ENCODE measurements at regions of chr15 and their contacts with region 1.

Region 1: DNA sequence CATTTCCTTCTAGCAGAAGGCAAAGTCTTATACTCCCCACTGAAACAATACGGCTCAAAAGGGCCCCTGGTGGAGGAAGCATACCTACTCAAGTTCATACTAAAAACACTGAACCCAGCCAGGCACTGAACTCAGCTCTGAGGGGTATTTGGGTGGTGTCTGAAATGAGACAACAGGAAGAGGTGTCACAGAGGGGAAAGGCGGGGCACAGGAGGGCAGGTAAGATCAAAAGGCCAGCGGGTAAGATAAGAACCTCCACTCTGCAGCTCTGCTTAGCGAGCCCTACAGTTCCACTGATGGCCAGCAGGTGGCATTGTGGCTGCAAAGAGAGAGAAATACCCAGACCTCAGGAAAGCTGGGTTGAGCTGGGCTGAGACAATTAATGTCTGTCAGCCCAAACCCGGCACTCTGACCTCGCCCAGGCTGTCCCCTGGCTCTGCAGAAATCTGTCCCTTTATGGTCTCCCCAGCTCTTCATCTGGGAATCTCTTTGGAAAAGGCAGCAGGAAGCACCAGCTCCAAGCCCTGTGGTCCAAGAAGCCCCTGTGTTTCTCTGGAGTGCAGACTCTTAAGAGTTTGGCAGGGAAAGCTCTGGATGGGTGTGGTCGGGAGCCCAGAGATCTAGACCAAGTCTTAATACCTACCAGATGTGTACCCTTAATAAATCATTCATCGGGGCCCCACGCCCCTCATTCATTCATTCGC is 8.4 kb downstream of the MFGE8 start:
- DNase-seq: peak; percentile 78
- H3K4me3 ChIP-seq: no peak overlapping the region
- H3K27ac ChIP-seq: no peak overlapping the region
- H3K4me1 ChIP-seq: no peaks in the 10 kb centered on the region
- H3K27me3 ChIP-seq: no peaks in the 10 kb centered on the region
- CTCF ChIP-seq: peak; percentile 97 to 98
- POLR2A ChIP-seq: no peak

Region 2: GRCh38 chr15:87863152-87863551 is 1041.6 kb before region 1 on chr15:
- CTCF ChIA-PET with region 1: no interaction called
- POLR2A ChIA-PET with region 1: no interaction called
- dilution Hi-C with region 1: no loop called
- intact Hi-C with region 1: no loop called
- DNase-seq: no peak
- H3K4me3 ChIP-seq: no peak overlapping the region
- H3K27ac ChIP-seq: no peak overlapping the region
- H3K4me1 ChIP-seq: no peaks in the 10 kb centered on the region
- H3K27me3 ChIP-seq: no peaks in the 10 kb centered on the region
- CTCF ChIP-seq: no peak
- POLR2A ChIP-seq: no peak

Region 3: DNA sequence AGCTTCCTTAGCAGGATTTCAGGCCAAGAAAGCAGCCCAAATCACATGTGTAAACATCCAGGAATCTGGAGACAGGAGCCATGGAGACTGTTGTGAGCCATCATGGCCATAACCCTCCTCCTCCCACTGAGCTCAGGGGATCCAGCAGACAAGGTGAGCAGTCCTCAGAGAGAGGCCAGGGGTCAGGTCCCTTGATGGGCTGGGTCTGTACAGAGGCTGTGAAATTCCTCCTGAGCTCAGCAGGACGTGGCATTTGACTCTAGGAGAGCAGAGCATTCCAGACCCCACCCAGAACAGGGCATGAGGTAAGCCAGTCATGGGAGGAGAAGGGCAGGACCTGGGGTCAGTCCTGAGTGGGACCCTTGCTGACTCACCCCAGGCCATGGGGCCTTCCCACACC is 168.6 kb before region 1 on chr15:
- CTCF ChIA-PET with region 1: no interaction called
- POLR2A ChIA-PET with region 1: no interaction called
- dilution Hi-C with region 1: no loop called
- intact Hi-C with region 1: no loop called
- DNase-seq: no peak
- H3K4me3 ChIP-seq: no peak overlapping the region
- H3K27ac ChIP-seq: no peak overlapping the region
- H3K4me1 ChIP-seq: no peaks in the 10 kb centered on the region
- H3K27me3 ChIP-seq: peaks cover 0 to 4% of the 10 kb centered on the region in 2 experiments
- CTCF ChIP-seq: no peak
- POLR2A ChIP-seq: no peak

Region 4: GRCh38 chr15:88865498-88866099 is 39.2 kb before region 1 on chr15:
- CTCF ChIA-PET with region 1: no interaction called
- POLR2A ChIA-PET with region 1: no interaction called
- dilution Hi-C with region 1: no loop called
- intact Hi-C with region 1: no loop called
- DNase-seq: peak; percentile 8
- H3K4me3 ChIP-seq: no peak overlapping the region
- H3K27ac ChIP-seq: no peak overlapping the region
- H3K4me1 ChIP-seq: peaks cover 6% of the 10 kb centered on the region
- H3K27me3 ChIP-seq: peaks cover 0 to 5% of the 10 kb centered on the region in 2 experiments
- CTCF ChIP-seq: no peak
- POLR2A ChIP-seq: no peak

Region 5: GRCh38 chr15:88878720-88879184 is 26.0 kb before region 1 on chr15:
- CTCF ChIA-PET with region 1: interaction called, 27 read pairs
- POLR2A ChIA-PET with region 1: no interaction called
- dilution Hi-C with region 1: no loop called
- intact Hi-C with region 1: no loop called
- DNase-seq: peak; percentile 39
- H3K4me3 ChIP-seq: no peak overlapping the region
- H3K27ac ChIP-seq: no peak overlapping the region
- H3K4me1 ChIP-seq: no peaks in the 10 kb centered on the region
- H3K27me3 ChIP-seq: no peaks in the 10 kb centered on the region
- CTCF ChIP-seq: peak; percentile 72 to 87
- POLR2A ChIP-seq: no peak

Region 6: GRCh38 chr15:88995449-88995848 is 90.7 kb after region 1 on chr15:
- CTCF ChIA-PET with region 1: interaction called, 11 read pairs
- POLR2A ChIA-PET with region 1: no interaction called
- dilution Hi-C with region 1: no loop called
- intact Hi-C with region 1: no loop called
- DNase-seq: no peak
- H3K4me3 ChIP-seq: no peak overlapping the region
- H3K27ac ChIP-seq: no peak overlapping the region
- H3K4me1 ChIP-seq: no peaks in the 10 kb centered on the region
- H3K27me3 ChIP-seq: no peaks in the 10 kb centered on the region
- CTCF ChIP-seq: no peak
- POLR2A ChIP-seq: no peak

Region 7: GRCh38 chr15:89003865-89004725 is 99.3 kb after region 1 on chr15:
- CTCF ChIA-PET with region 1: interaction called, 35 read pairs
- POLR2A ChIA-PET with region 1: no interaction called
- dilution Hi-C with region 1: no loop called
- intact Hi-C with region 1: no loop called
- DNase-seq: peak; percentile 8
- H3K4me3 ChIP-seq: no peak overlapping the region
- H3K27ac ChIP-seq: no peak overlapping the region
- H3K4me1 ChIP-seq: no peaks in the 10 kb centered on the region
- H3K27me3 ChIP-seq: peaks cover 0 to 1% of the 10 kb centered on the region in 2 experiments
- CTCF ChIP-seq: peak in 1 of 2 donors; percentile 38
- POLR2A ChIP-seq: no peak

Region 8: GRCh38 chr15:89017370-89018066 is 112.7 kb after region 1 on chr15:
- CTCF ChIA-PET with region 1: interaction called, 82 read pairs
- POLR2A ChIA-PET with region 1: no interaction called
- dilution Hi-C with region 1: no loop called
- intact Hi-C with region 1: loop called (anchors 1 kb)
- DNase-seq: peak; percentile 64
- H3K4me3 ChIP-seq: peak overlapping the region in 1 of 3 experiments; percentile 21
- H3K27ac ChIP-seq: no peak overlapping the region
- H3K4me1 ChIP-seq: no peaks in the 10 kb centered on the region
- H3K27me3 ChIP-seq: peaks cover 7 to 22% of the 10 kb centered on the region in 2 experiments
- CTCF ChIP-seq: peak; percentile 92
- POLR2A ChIP-seq: no peak

Region 9: DNA sequence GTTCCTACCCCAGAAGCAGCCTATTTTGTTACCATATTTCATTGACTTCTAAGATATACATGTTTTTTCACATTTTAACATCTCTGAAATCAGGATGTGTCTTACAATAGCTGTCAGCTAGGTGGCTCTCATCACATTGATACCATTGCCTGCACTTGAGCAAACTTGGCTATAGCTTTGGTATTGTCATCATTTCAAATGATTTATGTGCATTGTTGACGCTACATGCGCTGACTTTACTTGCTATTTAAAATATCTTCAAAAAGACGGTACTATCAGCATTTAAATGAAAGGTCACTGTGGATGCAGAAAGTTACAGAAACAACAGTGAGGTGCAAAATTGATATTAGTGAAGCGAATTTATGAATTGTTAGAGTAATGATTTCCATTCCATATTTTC is 129.5 kb after region 1 on chr15:
- CTCF ChIA-PET with region 1: interaction called, 11 read pairs
- POLR2A ChIA-PET with region 1: no interaction called
- dilution Hi-C with region 1: no loop called
- intact Hi-C with region 1: no loop called
- DNase-seq: peak; percentile 19
- H3K4me3 ChIP-seq: no peak overlapping the region
- H3K27ac ChIP-seq: no peak overlapping the region
- H3K4me1 ChIP-seq: no peaks in the 10 kb centered on the region
- H3K27me3 ChIP-seq: peaks cover 0 to 3% of the 10 kb centered on the region in 2 experiments
- CTCF ChIP-seq: peak in 1 of 2 donors; percentile 8
- POLR2A ChIP-seq: no peak

Region 10: DNA sequence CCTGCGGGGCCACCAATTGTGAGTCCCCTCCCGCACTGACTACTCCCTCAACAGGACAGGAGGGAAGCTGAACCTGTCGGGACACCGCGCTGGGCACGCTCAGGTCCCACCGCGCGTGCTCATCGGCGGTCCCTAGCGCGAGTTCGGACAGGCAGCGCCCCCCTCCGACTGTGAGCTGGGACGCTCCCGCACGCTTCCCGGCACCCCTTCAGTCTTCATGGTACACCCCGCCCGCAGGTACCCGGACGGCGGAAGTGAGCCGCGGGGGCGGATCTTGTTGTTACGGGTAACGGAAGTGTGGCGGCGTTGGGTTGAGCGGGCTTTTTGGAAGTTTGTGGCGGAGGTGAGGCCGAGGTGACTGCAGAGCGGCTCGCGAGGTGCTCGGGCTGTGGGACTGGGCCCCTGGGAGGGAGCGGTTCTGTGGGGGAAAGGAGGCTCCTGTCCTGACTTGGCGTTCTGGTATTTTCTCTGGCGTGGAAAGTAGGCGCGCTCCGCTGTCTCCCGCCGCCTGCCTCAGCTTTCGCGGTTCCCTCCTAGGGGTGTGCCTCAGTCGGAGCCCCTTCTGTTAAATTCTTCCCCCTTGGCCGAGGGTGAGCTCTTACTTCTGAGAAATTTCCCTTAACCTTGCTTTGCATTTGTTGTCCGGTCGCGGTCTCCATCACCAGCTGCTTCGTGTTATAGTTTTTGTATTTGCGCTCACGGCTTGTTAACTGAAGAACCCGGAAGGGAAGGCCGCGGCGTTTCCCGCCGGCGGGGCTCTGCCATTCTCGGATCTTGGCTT is 339.1 kb after region 1 on chr15 and contains the start of gene FANCI:
- CTCF ChIA-PET with region 1: interaction called, 9 read pairs
- POLR2A ChIA-PET with region 1: no interaction called
- dilution Hi-C with region 1: no loop called
- intact Hi-C with region 1: loop called (anchors 1 kb)
- DNase-seq: peak; percentile 92
- H3K4me3 ChIP-seq: peak within 1 kb of the TSS; percentile 81 to 92 (median 89)
- H3K27ac ChIP-seq: peak within 1 kb of the TSS; percentile 65
- H3K4me1 ChIP-seq: peaks cover 15% of the 10 kb centered on the region
- H3K27me3 ChIP-seq: peaks cover 5 to 7% of the 10 kb centered on the region in 2 experiments
- CTCF ChIP-seq: peak; percentile 45 to 51
- POLR2A ChIP-seq: no peak
- total RNA-seq, gene FANCI: 65.9 and 74.7 TPM in 2 replicates

Measured in endothelial cell of umbilical vein (primary cell).